ENCODE measurements at regions of chr15 and their contacts with region 1.

Region 1: DNA sequence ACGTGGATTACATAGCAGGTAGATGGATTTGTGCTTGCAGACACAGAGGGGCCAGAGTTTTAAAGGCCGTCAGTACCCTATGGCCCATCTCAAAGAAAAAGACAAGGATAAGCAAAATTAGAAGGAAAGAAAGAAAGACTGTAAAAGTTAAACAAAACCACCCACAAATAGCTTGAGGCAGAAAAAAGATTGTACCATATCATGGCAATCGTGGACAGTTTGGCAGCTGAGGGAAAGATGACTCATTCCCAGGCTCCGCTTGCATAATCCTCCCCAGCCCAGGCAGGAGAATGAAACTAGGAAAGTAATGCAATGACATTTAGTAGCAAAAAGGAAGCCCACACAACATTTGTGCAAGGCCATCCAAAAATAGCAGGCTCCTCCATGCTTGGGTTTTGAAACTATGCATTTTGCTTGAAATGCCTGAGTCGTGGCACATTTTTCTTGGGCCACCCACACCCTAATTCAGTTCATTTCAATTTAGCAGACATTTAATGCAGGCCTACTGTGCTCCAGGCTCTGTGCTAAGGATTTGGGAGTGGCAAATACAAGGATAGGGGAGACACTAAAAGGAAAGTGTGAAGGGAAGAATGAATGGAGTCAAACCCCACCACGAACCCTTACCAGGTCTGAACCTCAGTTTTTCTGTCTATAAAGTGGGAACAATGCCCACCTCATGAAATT is 40.9 kb upstream of the SMAD3 start:
- DNase-seq: peak; percentile 69
- H3K4me3 ChIP-seq: no peak overlapping the region
- H3K27ac ChIP-seq: peak overlapping the region in 1 of 2 donors; percentile 21
- H3K4me1 ChIP-seq: peaks cover 4% of the 10 kb centered on the region
- H3K27me3 ChIP-seq: no peaks in the 10 kb centered on the region
- CTCF ChIP-seq: no peak
- POLR2A ChIP-seq: no peak

Region 2: DNA sequence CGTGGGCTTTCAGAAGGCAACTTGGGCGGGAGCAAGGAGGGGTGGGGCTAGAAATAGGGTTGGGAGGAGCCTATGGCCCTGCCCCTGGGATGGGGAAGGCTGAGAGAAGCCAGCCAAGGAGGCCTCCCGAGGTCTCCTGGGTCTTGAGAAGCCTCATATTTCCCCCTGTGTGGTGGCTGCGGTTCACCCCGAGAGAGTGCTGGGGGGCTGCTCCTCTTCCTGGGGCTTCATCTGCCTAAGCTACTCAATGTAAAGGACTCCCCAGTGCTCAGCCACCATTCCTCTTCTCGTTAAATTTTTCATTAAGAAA is 148.1 kb before region 1 on chr15:
- intact Hi-C with region 1: no loop called
- DNase-seq: no peak
- H3K4me3 ChIP-seq: no peak overlapping the region
- H3K27ac ChIP-seq: no peak overlapping the region
- H3K4me1 ChIP-seq: no peaks in the 10 kb centered on the region
- H3K27me3 ChIP-seq: no peaks in the 10 kb centered on the region
- CTCF ChIP-seq: no peak
- POLR2A ChIP-seq: no peak

Region 3: GRCh38 chr15:67109141-67110034 is 84.9 kb after region 1 on chr15:
- intact Hi-C with region 1: loop called (anchors 10 kb)
- DNase-seq: no peak
- H3K4me3 ChIP-seq: no peak overlapping the region
- H3K27ac ChIP-seq: peak overlapping the region in 1 of 2 donors; percentile 7
- H3K4me1 ChIP-seq: peaks cover 18% of the 10 kb centered on the region
- H3K27me3 ChIP-seq: no peaks in the 10 kb centered on the region
- CTCF ChIP-seq: no peak
- POLR2A ChIP-seq: no peak

Region 4: GRCh38 chr15:67254238-67255175 is 230.1 kb after region 1 on chr15 and contains the starts of genes AAGAB and IQCH:
- intact Hi-C with region 1: loop called (anchors 10 kb)
- DNase-seq: peak; percentile 95
- H3K4me3 ChIP-seq: peak within 1 kb of the TSS; percentile 72 to 77
- H3K27ac ChIP-seq: peak within 1 kb of the TSS; percentile 73 to 78
- H3K4me1 ChIP-seq: no peaks in the 10 kb centered on the region
- H3K27me3 ChIP-seq: no peaks in the 10 kb centered on the region
- CTCF ChIP-seq: peak in 2 of 4 experiments; percentile 16 to 34
- POLR2A ChIP-seq: peak; percentile 61
- total RNA-seq, gene AAGAB: 34.1 to 34.3 TPM
- total RNA-seq, gene IQCH: 5.8 to 9.5 TPM

Region 5: DNA sequence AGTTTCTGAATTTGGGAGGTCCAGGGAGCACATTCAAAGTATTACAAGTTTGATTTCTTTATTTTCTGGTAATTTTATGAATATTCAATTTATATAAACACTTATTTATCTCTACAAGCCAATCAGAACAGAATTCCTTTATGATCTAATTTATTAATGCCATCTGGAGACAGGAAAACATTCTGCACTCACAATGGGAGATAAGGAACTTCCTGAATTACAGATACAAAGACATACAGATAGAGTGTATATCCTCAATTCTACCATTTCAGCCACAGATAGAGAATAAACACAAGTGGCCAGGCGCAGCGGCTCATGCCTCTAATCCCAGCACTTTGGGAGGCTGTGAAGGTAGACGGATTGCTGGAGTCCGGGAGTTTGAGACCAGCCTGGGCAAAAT is 316.2 kb after region 1 on chr15:
- intact Hi-C with region 1: no loop called
- DNase-seq: no peak
- H3K4me3 ChIP-seq: no peak overlapping the region
- H3K27ac ChIP-seq: no peak overlapping the region
- H3K4me1 ChIP-seq: no peaks in the 10 kb centered on the region
- H3K27me3 ChIP-seq: no peaks in the 10 kb centered on the region
- CTCF ChIP-seq: no peak
- POLR2A ChIP-seq: no peak

Measured in prostate gland (tissue), 2 donors.